ENCODE measurements at regions of chr1 and their contacts with region 1.

Region 1: GRCh38 chr1:226697151-226697939 is 41.7 kb downstream of the ITPKB start:
- DNase-seq: no peak
- ATAC-seq: peak; percentile 77
- H3K4me3 Mint-ChIP-seq: no peak overlapping the region
- H3K27ac Mint-ChIP-seq: peak overlapping the region; percentile 97
- H3K4me1 Mint-ChIP-seq: peaks cover 90% of the 10 kb centered on the region
- H3K27me3 Mint-ChIP-seq: no peaks in the 10 kb centered on the region

Region 2: GRCh38 chr1:226708342-226708780 is 11.0 kb after region 1 on chr1:
- CTCF ChIA-PET with region 1: interaction called, 27 read pairs
- POLR2A ChIA-PET with region 1: interaction called, 4 read pairs
- intact Hi-C with region 1: no loop called
- DNase-seq: peak; percentile 63
- ATAC-seq: peak; percentile 75
- H3K4me3 Mint-ChIP-seq: peak overlapping the region; percentile 34
- H3K27ac Mint-ChIP-seq: peak overlapping the region; percentile 100
- H3K4me1 Mint-ChIP-seq: peaks cover 93% of the 10 kb centered on the region
- H3K27me3 Mint-ChIP-seq: no peaks in the 10 kb centered on the region